CD8-positive, alpha-beta T cell (primary cell): ENCODE measurements at regions of chr3 and their contacts with region 1.

Region 1: DNA sequence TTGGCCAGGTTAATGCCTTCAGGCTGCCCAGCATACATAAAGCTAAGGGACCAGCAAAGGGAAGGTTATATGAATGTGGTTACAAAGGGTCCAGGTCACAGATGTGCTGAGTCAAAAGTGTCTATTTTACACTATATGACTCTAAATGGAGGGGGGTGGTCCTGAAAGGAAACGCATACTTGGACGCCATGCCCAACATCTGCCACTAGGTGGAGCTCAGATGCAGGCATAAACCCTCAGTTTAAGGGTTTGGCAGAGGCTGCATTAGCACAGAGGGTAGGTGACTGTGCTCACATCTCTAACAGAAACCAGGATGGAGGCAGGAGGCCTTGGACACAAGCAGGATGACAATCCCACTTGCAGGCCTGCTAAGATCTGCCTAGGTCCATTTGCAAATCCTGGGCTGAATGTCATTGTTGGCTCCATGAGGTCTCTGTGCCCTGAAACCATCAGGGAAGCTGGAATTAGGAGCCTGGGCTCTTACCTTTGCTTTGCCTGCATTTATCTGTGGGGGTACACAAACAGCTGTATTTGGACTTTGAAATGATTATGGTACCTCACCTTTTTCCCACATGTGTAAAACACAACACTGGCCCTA is 55.8 kb downstream of the ZNF621 start:
- DNase-seq: peak; percentile 23 to 70 (median 62)
- ATAC-seq: peak; percentile 78
- H3K4me3 ChIP-seq: no peak overlapping the region
- H3K4me3 Mint-ChIP-seq: no peak overlapping the region
- H3K27ac ChIP-seq: no peak overlapping the region
- H3K27ac Mint-ChIP-seq: no peak overlapping the region
- H3K4me1 ChIP-seq: no peaks in the 10 kb centered on the region
- H3K4me1 Mint-ChIP-seq: no peaks in the 10 kb centered on the region
- H3K27me3 ChIP-seq: peaks cover 0 to 3% of the 10 kb centered on the region in 2 experiments
- H3K27me3 Mint-ChIP-seq: peaks cover 10% of the 10 kb centered on the region
- CTCF ChIP-seq: peak; percentile 83

Region 2: GRCh38 chr3:40329071-40329470 is 251.5 kb before region 1 on chr3:
- CTCF ChIA-PET with region 1: interaction called, 16 read pairs
- POLR2A ChIA-PET with region 1: no interaction called
- intact Hi-C with region 1: loop called (anchors 1 to 2 kb)
- DNase-seq: no peak
- ATAC-seq: no peak
- H3K4me3 ChIP-seq: no peak overlapping the region
- H3K4me3 Mint-ChIP-seq: no peak overlapping the region
- H3K27ac ChIP-seq: no peak overlapping the region
- H3K27ac Mint-ChIP-seq: no peak overlapping the region
- H3K4me1 ChIP-seq: no peaks in the 10 kb centered on the region
- H3K4me1 Mint-ChIP-seq: peaks cover 3% of the 10 kb centered on the region
- H3K27me3 ChIP-seq: no peaks in the 10 kb centered on the region
- H3K27me3 Mint-ChIP-seq: peaks cover 3% of the 10 kb centered on the region
- CTCF ChIP-seq: no peak

Region 3: GRCh38 chr3:40597441-40597840 is 16.8 kb after region 1 on chr3:
- CTCF ChIA-PET with region 1: interaction called, 16 read pairs
- POLR2A ChIA-PET with region 1: no interaction called
- intact Hi-C with region 1: no loop called
- DNase-seq: no peak
- ATAC-seq: no peak
- H3K4me3 ChIP-seq: no peak overlapping the region
- H3K4me3 Mint-ChIP-seq: no peak overlapping the region
- H3K27ac ChIP-seq: no peak overlapping the region
- H3K27ac Mint-ChIP-seq: no peak overlapping the region
- H3K4me1 ChIP-seq: no peaks in the 10 kb centered on the region
- H3K4me1 Mint-ChIP-seq: no peaks in the 10 kb centered on the region
- H3K27me3 ChIP-seq: no peaks in the 10 kb centered on the region
- H3K27me3 Mint-ChIP-seq: peaks cover 27% of the 10 kb centered on the region
- CTCF ChIP-seq: no peak

Region 4: DNA sequence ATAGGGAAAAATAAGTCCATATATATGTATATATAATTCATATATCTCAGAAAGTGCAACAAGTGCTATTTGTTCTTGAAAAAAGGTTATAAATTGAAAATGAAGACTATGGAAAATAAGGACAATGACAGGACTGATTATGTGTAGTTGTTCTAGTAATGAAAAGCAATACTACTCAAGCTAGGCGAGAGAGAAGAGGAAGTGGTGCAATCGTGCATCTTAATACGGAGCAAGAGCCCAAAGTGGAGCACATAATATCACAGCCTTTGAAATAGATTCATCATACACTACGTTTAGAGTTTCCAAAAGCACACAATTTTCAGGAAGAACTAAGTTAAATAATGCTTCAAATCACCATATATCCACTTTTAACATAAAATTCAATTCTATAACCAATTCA is 1293.4 kb after region 1 on chr3:
- CTCF ChIA-PET with region 1: interaction called, 159 read pairs
- POLR2A ChIA-PET with region 1: no interaction called
- intact Hi-C with region 1: no loop called
- DNase-seq: no peak
- ATAC-seq: no peak
- H3K4me3 ChIP-seq: no peak overlapping the region
- H3K4me3 Mint-ChIP-seq: no peak overlapping the region
- H3K27ac ChIP-seq: no peak overlapping the region
- H3K27ac Mint-ChIP-seq: no peak overlapping the region
- H3K4me1 ChIP-seq: no peaks in the 10 kb centered on the region
- H3K4me1 Mint-ChIP-seq: no peaks in the 10 kb centered on the region
- H3K27me3 ChIP-seq: no peaks in the 10 kb centered on the region
- H3K27me3 Mint-ChIP-seq: no peaks in the 10 kb centered on the region
- CTCF ChIP-seq: no peak

Region 5: DNA sequence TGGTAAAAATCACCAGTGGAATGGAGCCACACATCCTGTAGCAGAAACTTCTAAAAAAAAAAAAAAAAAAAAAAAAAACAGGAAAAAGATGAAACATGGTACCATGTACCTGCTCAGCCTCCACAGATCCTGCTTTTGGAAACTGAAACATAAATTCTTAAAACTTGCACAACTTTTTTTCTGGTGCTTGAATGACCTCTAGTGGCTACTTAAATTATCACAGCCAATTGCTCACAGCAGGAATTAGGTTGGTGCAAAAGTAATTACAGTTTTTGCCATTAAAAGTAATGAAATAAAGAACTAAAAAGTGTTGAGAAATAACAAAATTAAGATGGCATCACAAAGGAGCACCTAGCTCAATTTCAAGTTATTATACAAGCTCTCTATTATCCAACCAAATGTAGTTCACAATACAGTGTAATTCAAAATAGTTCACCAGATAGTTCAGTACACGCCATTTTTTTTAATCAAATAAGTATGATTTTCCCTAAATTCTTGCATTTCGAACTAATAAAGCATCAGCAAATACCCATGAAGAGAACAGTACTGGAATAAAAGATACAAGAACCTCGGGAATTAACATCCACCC is 1300.7 kb after region 1 on chr3:
- CTCF ChIA-PET with region 1: interaction called, 159 read pairs
- POLR2A ChIA-PET with region 1: no interaction called
- intact Hi-C with region 1: loop called (anchors 1 kb)
- DNase-seq: peak in 3 of 9 experiments; percentile 13 to 62 (median 52)
- ATAC-seq: no peak
- H3K4me3 ChIP-seq: no peak overlapping the region
- H3K4me3 Mint-ChIP-seq: no peak overlapping the region
- H3K27ac ChIP-seq: no peak overlapping the region
- H3K27ac Mint-ChIP-seq: no peak overlapping the region
- H3K4me1 ChIP-seq: no peaks in the 10 kb centered on the region
- H3K4me1 Mint-ChIP-seq: no peaks in the 10 kb centered on the region
- H3K27me3 ChIP-seq: no peaks in the 10 kb centered on the region
- H3K27me3 Mint-ChIP-seq: no peaks in the 10 kb centered on the region
- CTCF ChIP-seq: peak; percentile 82

Region 6: DNA sequence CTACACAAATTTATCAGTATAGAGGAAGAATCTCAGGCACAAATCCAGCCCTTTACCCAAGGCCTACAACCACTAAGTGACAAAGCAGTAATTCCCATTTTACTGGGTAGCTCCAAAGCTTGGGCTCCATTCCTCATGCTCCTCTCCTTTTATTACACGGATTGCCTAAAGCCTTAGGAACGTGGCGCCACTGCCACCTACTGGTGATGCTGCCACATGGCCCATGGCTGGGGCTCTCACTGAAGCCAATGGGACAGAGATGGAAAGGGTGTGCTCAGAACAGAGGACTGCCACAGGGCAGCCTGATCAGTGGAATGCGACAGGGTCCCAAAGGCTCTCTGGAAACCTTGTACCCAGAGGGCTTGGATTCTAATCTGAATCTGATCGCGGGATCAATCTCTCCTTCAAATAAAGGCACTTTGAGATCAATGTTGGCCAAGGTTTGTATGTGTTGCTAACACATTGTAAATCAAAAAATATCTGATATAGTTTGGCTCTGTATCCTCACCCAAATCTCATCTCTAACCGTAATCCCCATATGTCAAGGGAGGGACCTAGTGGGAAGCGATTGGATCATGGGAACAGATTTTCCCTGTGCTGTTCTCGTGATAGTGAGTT is 1863.3 kb after region 1 on chr3:
- CTCF ChIA-PET with region 1: interaction called, 5 read pairs
- POLR2A ChIA-PET with region 1: no interaction called
- intact Hi-C with region 1: loop called (anchors 2 to 5 kb)
- DNase-seq: peak; percentile 67 to 91 (median 72)
- ATAC-seq: peak; percentile 82
- H3K4me3 ChIP-seq: no peak overlapping the region
- H3K4me3 Mint-ChIP-seq: no peak overlapping the region
- H3K27ac ChIP-seq: no peak overlapping the region
- H3K27ac Mint-ChIP-seq: no peak overlapping the region
- H3K4me1 ChIP-seq: no peaks in the 10 kb centered on the region
- H3K4me1 Mint-ChIP-seq: no peaks in the 10 kb centered on the region
- H3K27me3 ChIP-seq: no peaks in the 10 kb centered on the region
- H3K27me3 Mint-ChIP-seq: peaks cover 6% of the 10 kb centered on the region
- CTCF ChIP-seq: peak; percentile 95